CD4-positive, alpha-beta memory T cell (primary cell): ENCODE measurements at regions of chr11 and their contacts with region 1.

Region 1: GRCh38 chr11:107689317-107690202 is 22.3 kb downstream of the SLN start:
- DNase-seq: peak; percentile 33 to 59 (median 40)
- H3K4me3 ChIP-seq: no peak overlapping the region
- H3K4me3 Mint-ChIP-seq: no peak overlapping the region
- H3K27ac ChIP-seq: no peak overlapping the region
- H3K27ac Mint-ChIP-seq: no peak overlapping the region
- H3K4me1 ChIP-seq: no peaks in the 10 kb centered on the region
- H3K4me1 Mint-ChIP-seq: peaks cover 0 to 5% (median 1%) of the 10 kb centered on the region in 4 donors
- H3K27me3 ChIP-seq: no peaks in the 10 kb centered on the region
- H3K27me3 Mint-ChIP-seq: peaks cover 11% of the 10 kb centered on the region in 2 donors

Region 2: GRCh38 chr11:106156290-106156937 is 1533.1 kb before region 1 on chr11:
- CTCF ChIA-PET with region 1: no interaction called
- POLR2A ChIA-PET with region 1: no interaction called
- intact Hi-C with region 1: loop called (anchors 5 kb)
- DNase-seq: no peak
- H3K4me3 ChIP-seq: no peak overlapping the region
- H3K4me3 Mint-ChIP-seq: no peak overlapping the region
- H3K27ac ChIP-seq: no peak overlapping the region
- H3K27ac Mint-ChIP-seq: no peak overlapping the region
- H3K4me1 ChIP-seq: no peaks in the 10 kb centered on the region
- H3K4me1 Mint-ChIP-seq: peaks cover 0 to 6% (median 4%) of the 10 kb centered on the region in 4 donors
- H3K27me3 ChIP-seq: no peaks in the 10 kb centered on the region
- H3K27me3 Mint-ChIP-seq: peaks cover 3 to 5% of the 10 kb centered on the region in 2 donors

Region 3: DNA sequence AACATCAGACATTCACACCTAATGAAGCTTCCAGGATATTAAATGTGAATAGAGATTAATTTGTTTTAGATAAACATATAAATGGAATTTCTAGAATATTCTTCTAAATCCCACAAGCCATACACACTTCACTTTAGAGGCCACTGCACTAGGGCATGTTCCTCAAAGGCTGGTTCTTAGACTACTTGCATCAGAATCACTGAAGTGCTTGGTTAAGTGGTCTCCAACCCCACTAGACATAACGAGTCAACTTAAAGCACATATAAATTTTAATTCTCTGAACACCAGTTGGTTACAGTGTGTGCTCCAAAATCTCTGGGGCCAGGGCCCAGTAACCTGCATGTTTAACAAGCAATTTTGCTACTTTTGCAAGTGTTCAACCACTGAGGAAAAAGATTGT is 116.1 kb before region 1 on chr11:
- CTCF ChIA-PET with region 1: interaction called, 40 read pairs
- POLR2A ChIA-PET with region 1: no interaction called
- intact Hi-C with region 1: no loop called
- DNase-seq: no peak
- H3K4me3 ChIP-seq: no peak overlapping the region
- H3K4me3 Mint-ChIP-seq: no peak overlapping the region
- H3K27ac ChIP-seq: no peak overlapping the region
- H3K27ac Mint-ChIP-seq: no peak overlapping the region
- H3K4me1 ChIP-seq: no peaks in the 10 kb centered on the region
- H3K4me1 Mint-ChIP-seq: no peaks in the 10 kb centered on the region
- H3K27me3 ChIP-seq: no peaks in the 10 kb centered on the region
- H3K27me3 Mint-ChIP-seq: peaks cover 2 to 6% of the 10 kb centered on the region in 2 donors

Region 4: DNA sequence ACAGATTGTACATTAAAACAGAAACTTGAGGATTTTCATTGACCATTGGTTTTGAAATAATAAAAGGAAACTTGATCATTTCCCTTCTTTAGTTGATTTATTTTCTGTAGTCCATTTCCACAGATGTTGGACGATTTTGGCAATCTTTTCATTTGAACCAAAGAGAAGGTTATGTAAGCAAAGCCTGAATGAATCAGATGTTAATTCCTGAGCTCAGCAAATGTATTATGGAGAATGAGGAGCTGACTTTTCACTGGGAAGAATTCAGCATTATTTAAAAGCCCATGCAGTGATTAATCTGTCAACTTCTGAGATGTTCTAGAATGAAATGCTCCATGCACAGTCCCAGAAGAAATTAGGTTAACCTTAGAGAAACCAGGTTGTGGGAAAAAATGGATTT is 69.6 kb before region 1 on chr11:
- CTCF ChIA-PET with region 1: no interaction called
- POLR2A ChIA-PET with region 1: no interaction called
- intact Hi-C with region 1: no loop called
- DNase-seq: no peak
- H3K4me3 ChIP-seq: no peak overlapping the region
- H3K4me3 Mint-ChIP-seq: no peak overlapping the region
- H3K27ac ChIP-seq: no peak overlapping the region
- H3K27ac Mint-ChIP-seq: no peak overlapping the region
- H3K4me1 ChIP-seq: no peaks in the 10 kb centered on the region
- H3K4me1 Mint-ChIP-seq: no peaks in the 10 kb centered on the region
- H3K27me3 ChIP-seq: no peaks in the 10 kb centered on the region
- H3K27me3 Mint-ChIP-seq: peaks cover 16 to 34% of the 10 kb centered on the region in 2 donors

Region 5: DNA sequence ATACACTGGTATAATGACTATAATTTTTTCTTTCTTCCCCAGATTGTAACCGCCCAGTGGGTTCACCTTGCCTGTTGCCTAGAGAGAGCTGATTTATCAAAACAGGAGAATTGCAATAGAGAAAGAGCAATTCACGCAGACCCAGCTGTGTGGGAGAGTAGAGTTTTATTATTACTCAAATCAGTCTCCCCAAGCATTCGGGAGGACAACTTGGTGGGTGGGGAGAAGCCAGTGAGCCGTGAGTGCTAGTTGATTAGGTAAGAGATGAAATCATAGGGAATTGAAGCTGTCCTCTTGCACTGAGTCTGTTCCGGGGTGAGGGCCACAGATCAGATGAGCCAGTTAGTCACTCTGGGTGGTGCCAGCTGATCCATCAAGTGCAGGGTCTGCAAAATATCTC is 95.8 kb after region 1 on chr11:
- CTCF ChIA-PET with region 1: no interaction called
- POLR2A ChIA-PET with region 1: no interaction called
- intact Hi-C with region 1: no loop called
- DNase-seq: no peak
- H3K4me3 ChIP-seq: no peak overlapping the region
- H3K4me3 Mint-ChIP-seq: no peak overlapping the region
- H3K27ac ChIP-seq: no peak overlapping the region
- H3K27ac Mint-ChIP-seq: peak overlapping the region in 1 of 7 donors; percentile 44
- H3K4me1 ChIP-seq: no peaks in the 10 kb centered on the region
- H3K4me1 Mint-ChIP-seq: no peaks in the 10 kb centered on the region
- H3K27me3 ChIP-seq: no peaks in the 10 kb centered on the region
- H3K27me3 Mint-ChIP-seq: peaks cover 0 to 2% of the 10 kb centered on the region in 2 donors